Panc1 (cell line): ENCODE measurements at regions of chr6 and their contacts with region 1.

Region 1: DNA sequence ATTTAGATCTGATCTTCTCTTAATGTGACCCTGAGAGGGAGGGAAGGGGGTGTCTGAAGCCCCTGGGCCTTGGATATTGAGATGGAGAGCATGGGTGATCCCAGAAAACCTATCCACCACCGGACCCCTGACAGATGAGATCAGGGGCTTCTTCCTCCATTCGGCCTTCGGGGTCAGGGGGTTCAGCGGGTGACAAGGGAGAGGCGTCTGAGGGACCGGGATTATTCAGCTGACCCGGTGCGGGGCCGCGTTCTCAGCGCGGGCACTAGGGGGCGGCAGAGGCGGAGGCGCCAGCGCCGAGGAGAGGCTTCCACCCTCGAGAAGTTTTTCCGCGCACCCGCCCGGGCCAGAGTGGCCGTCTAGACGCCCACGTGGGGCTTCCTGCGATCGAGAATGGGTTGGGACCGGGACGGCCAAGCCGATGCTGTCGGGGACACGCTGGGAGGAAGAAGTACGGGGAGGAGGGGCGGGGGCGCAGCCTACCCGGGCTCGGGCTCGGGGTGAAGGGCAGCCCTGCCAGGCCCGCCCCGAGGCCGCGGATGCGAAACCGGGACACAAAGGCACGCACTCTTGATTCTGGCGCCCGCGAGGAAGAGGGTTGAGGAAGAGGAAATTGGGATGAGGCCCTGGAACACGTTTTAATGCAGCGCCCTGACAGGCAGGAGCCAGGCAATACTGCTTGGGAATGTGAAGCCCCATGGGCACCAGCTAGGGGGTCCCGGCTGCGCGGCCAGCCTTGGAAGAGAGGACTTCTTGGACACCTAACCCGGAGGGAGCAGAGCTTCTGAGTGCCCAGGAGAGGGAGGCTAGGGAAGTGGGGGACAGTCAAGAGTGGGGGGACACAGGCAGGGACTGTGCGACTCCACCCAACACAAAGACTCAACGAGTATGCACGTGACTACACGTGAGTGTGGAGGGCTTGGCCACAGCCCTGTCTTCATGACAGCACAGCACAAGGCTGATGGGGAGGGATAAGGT is 30.6 kb downstream of the COL11A2 start:
- DNase-seq: no peak
- ATAC-seq: peak; percentile 91
- H3K4me3 ChIP-seq: peak overlapping the region; percentile 49 to 59
- H3K27ac ChIP-seq: peak overlapping the region; percentile 66
- H3K4me1 ChIP-seq: peaks cover 13% of the 10 kb centered on the region
- H3K27me3 ChIP-seq: no peaks in the 10 kb centered on the region
- CTCF ChIP-seq: peak; percentile 99

Region 2: DNA sequence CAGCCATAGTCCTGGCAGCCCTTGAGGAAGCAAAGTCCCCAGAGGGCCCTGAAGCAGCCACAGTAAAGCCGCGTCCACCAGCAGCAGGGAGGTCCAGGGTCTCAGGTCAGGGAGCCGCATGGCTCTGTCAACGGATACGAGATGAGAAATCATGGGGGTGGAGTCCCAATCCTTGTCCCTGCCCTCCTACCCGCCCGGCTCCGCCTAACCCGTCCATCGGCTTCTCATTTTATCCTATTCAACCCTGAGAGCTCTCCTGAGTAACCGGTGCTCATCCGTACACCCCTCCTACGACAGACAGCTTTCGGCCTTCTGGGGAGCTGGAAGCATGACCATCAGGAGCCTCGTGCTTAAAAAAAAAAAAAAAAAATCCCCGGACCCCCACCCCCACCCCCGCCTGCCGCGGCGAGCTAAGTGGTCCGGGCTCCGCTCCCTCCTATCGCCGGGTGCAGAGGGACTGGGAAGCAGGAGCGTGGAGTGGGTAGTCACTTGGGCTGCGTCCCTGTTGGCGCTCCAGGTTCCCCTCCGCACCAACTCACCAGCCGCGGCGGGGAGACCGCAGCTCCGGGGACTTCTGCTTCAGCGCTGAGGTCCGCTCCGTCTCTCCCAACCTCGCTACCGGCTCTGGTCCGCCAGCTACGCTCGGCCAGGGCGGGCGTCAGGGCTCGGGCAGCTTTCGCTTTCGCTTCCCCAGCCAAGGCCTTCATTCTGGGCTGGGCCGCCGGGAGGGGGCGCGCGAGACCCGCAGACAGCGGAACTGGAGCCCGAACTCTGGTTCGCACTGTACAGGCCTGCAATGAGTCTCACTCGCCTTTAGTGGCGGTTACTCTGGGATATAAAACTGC is 323.3 kb before region 1 on chr6 and contains the start of gene TAP2:
- CTCF ChIA-PET with region 1: no interaction called
- POLR2A ChIA-PET with region 1: no interaction called
- in situ Hi-C with region 1: no loop called
- intact Hi-C with region 1: no loop called
- DNase-seq: peak; percentile 63
- ATAC-seq: peak; percentile 96
- H3K4me3 ChIP-seq: peak within 1 kb of the TSS; percentile 65 to 76
- H3K27ac ChIP-seq: peak within 1 kb of the TSS; percentile 89
- H3K4me1 ChIP-seq: peaks cover 9% of the 10 kb centered on the region
- H3K27me3 ChIP-seq: no peaks in the 10 kb centered on the region
- CTCF ChIP-seq: peak; percentile 98
- total RNA-seq, gene TAP2: 93.6 TPM

Region 3: GRCh38 chr6:32920715-32921114 is 240.9 kb before region 1 on chr6:
- CTCF ChIA-PET with region 1: interaction called, 12 read pairs
- POLR2A ChIA-PET with region 1: no interaction called
- in situ Hi-C with region 1: no loop called
- intact Hi-C with region 1: no loop called
- DNase-seq: no peak
- ATAC-seq: no peak
- H3K4me3 ChIP-seq: no peak overlapping the region
- H3K27ac ChIP-seq: no peak overlapping the region
- H3K4me1 ChIP-seq: no peaks in the 10 kb centered on the region
- H3K27me3 ChIP-seq: peaks cover 6% of the 10 kb centered on the region; the same call in 1 of the 2 replicates
- CTCF ChIP-seq: no peak

Region 4: GRCh38 chr6:33189625-33190448 is 28.2 kb after region 1 on chr6:
- CTCF ChIA-PET with region 1: no interaction called
- POLR2A ChIA-PET with region 1: no interaction called
- in situ Hi-C with region 1: no loop called
- intact Hi-C with region 1: no loop called
- DNase-seq: no peak
- ATAC-seq: no peak
- H3K4me3 ChIP-seq: no peak overlapping the region
- H3K27ac ChIP-seq: no peak overlapping the region
- H3K4me1 ChIP-seq: no peaks in the 10 kb centered on the region
- H3K27me3 ChIP-seq: no peaks in the 10 kb centered on the region
- CTCF ChIP-seq: no peak

Region 5: GRCh38 chr6:33200219-33201146 is 38.8 kb after region 1 on chr6 and contains the starts of genes RXRB and SLC39A7:
- CTCF ChIA-PET with region 1: interaction called, 8 read pairs
- POLR2A ChIA-PET with region 1: interaction called, 11 read pairs
- in situ Hi-C with region 1: no loop called
- intact Hi-C with region 1: no loop called
- DNase-seq: peak; percentile 97
- ATAC-seq: peak; percentile 78
- H3K4me3 ChIP-seq: peak within 1 kb of the TSS; percentile 68 to 100
- H3K27ac ChIP-seq: peak within 1 kb of the TSS; percentile 93
- H3K4me1 ChIP-seq: peaks cover 37% of the 10 kb centered on the region
- H3K27me3 ChIP-seq: no peaks in the 10 kb centered on the region
- CTCF ChIP-seq: no peak
- total RNA-seq, gene RXRB: 27.4 TPM
- total RNA-seq, gene SLC39A7: 135 TPM

Region 6: GRCh38 chr6:33211666-33212346 is 50.2 kb after region 1 on chr6:
- CTCF ChIA-PET with region 1: no interaction called
- POLR2A ChIA-PET with region 1: no interaction called
- in situ Hi-C with region 1: no loop called
- intact Hi-C with region 1: no loop called
- DNase-seq: no peak
- ATAC-seq: no peak
- H3K4me3 ChIP-seq: no peak overlapping the region
- H3K27ac ChIP-seq: no peak overlapping the region
- H3K4me1 ChIP-seq: peaks cover 15% of the 10 kb centered on the region
- H3K27me3 ChIP-seq: no peaks in the 10 kb centered on the region
- CTCF ChIP-seq: no peak; the same call in 1 of the 2 replicates